ENCODE measurements at regions of chr16 and their contacts with region 1.

Region 1: DNA sequence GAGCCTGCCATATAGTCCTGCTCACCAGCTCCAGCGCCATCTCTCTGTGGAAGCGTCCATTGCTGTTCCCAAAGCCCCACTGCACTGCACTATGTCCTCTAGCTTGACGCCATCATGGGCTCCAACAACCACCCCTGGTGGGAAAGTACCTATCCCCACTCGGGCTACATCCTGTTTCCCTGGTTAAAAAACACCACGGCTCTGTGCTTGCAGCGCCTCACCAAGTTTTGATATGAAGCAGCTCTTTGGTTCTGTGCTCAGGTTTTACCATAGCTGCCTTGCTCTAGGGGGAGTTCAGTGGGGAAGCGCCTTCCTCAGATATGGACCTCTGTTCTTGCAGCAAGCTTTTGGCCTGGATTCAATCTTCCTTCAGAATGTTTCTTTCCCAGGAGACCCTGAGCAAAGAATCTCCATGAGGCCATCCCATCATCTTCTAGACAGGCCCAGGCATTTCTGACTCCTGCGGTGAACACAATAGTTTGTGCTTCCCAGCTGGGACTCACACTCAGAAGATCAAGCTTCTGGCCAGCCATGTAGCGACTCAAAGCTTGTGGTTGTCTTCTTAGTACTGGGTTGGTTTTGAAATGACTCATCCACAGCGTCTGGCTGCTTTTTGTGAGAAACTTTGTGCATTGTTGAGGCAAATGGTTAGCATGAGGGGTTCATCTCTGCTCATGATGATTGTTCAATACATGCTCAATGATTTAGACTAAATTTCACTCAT is 39.5 kb downstream of the DYNLRB2 start:
- DNase-seq: peak; percentile 76
- H3K4me3 Mint-ChIP-seq: peak overlapping the region; percentile 82
- H3K27ac Mint-ChIP-seq: peak overlapping the region; percentile 99
- H3K4me1 Mint-ChIP-seq: peaks cover 51% of the 10 kb centered on the region
- H3K27me3 Mint-ChIP-seq: no peaks in the 10 kb centered on the region

Region 2: GRCh38 chr16:78770353-78771091 is 1809.7 kb before region 1 on chr16:
- intact Hi-C with region 1: loop called (anchors 10 kb)
- DNase-seq: peak; percentile 62
- H3K4me3 Mint-ChIP-seq: no peak overlapping the region
- H3K27ac Mint-ChIP-seq: peak overlapping the region; percentile 2
- H3K4me1 Mint-ChIP-seq: peaks cover 35% of the 10 kb centered on the region
- H3K27me3 Mint-ChIP-seq: peaks cover 7% of the 10 kb centered on the region

Region 3: DNA sequence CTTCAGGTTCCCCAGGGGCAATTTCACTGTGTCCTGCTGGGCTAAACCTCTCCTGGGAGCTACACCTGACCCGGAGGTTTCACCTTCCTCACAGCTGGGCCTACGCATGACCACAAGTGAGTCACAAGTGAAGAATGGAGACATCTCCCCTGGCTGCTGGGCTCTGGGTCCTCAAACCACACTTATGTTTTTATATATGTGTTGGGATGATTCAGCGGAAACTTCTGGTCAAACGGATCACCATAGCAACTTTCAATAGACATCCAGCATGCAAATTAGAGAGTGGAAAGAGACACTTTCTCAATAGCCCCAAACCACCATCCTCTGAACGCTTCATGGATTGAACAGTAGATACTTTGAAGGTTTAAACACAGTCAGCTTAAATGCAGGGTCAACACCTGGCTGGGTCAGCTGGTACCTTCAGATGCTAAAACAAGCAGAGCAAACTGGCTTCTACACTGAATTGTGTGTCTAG is 951.7 kb before region 1 on chr16:
- intact Hi-C with region 1: loop called (anchors 5 kb)
- DNase-seq: peak; percentile 74
- H3K4me3 Mint-ChIP-seq: peak overlapping the region; percentile 9
- H3K27ac Mint-ChIP-seq: peak overlapping the region; percentile 86
- H3K4me1 Mint-ChIP-seq: peaks cover 56% of the 10 kb centered on the region
- H3K27me3 Mint-ChIP-seq: peaks cover 12% of the 10 kb centered on the region

Region 4: DNA sequence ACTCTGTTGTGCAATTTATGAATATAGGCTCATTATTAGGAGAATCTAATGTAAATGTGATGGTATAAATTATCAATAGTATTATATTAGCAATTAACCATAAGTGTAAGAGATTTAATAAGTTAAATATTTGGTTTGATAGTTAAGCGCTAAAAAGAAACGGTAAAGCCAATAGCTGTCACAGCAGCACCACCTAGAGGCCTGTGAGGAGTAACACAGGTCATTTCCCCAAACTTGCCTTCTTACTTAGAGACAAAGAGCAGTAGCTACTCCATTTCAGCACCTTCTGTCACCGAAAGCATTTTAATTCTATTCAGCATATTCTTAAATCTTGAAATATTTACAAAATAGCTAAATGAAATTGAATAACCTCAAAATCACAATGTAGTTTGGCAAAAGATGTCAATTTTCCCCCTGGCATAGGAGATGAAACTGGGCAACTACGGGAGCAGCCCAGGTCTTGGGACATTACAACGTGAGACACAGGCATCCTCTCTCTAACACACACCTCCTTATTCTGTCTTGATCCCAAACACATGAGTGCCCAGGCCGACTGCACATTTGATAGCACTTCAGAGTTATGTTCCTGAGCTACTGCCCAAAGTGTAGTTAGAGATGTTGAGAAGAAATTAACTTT is 53.7 kb before region 1 on chr16:
- intact Hi-C with region 1: no loop called
- DNase-seq: peak; percentile 35
- H3K4me3 Mint-ChIP-seq: no peak overlapping the region
- H3K27ac Mint-ChIP-seq: no peak overlapping the region
- H3K4me1 Mint-ChIP-seq: peaks cover 8% of the 10 kb centered on the region
- H3K27me3 Mint-ChIP-seq: peaks cover 26% of the 10 kb centered on the region

Region 5: DNA sequence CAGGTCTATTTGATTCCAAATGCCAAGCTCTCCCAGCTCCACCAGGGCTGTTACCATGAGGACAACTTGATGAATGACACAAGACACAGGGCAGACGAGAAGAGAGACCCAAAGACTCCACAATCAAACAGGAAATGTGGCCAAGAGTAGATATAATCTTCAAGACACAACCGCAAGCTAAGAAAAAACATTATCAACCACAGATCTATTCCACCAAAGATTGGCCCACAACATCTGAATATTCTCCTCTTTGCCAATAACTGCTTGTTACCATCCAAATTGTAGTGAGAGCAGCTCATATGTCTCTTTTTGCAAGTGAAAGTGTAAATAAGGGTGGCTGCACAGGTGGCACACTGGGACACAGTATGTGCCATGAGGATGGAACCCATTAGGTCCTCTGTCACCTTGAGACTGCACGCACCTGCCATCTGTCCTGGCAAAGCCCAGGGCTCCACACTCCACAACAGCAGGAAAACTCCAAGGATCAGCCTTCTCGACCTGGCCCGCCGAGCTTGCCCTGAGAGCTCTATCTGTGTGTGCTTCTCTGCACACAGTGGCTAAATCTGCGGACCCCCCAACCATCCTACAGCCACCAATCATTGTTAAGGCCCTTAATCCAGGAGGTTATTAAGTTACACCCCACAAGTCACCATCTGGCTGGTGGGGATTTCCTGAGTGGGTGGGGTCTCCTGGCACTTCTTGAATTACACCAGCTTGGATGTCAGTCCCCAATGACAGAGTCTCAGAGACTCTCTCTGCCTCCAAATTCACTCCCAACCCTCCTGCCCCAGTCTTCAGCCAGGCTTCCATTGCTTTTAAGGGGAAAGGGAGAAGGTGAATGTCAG is 11.0 kb after region 1 on chr16:
- intact Hi-C with region 1: loop called (anchors 1 kb)
- DNase-seq: peak; percentile 58
- H3K4me3 Mint-ChIP-seq: peak overlapping the region; percentile 53
- H3K27ac Mint-ChIP-seq: peak overlapping the region; percentile 48
- H3K4me1 Mint-ChIP-seq: peaks cover 39% of the 10 kb centered on the region
- H3K27me3 Mint-ChIP-seq: peaks cover 50% of the 10 kb centered on the region

Region 6: GRCh38 chr16:80759419-80760162 is 179.3 kb after region 1 on chr16:
- intact Hi-C with region 1: loop called (anchors 2 kb)
- DNase-seq: no peak
- H3K4me3 Mint-ChIP-seq: no peak overlapping the region
- H3K27ac Mint-ChIP-seq: peak overlapping the region; percentile 80
- H3K4me1 Mint-ChIP-seq: peaks cover 22% of the 10 kb centered on the region
- H3K27me3 Mint-ChIP-seq: no peaks in the 10 kb centered on the region

Region 7: GRCh38 chr16:81006814-81007696 is 426.8 kb after region 1 on chr16 and contains the starts of genes CENPN and CMC2:
- intact Hi-C with region 1: loop called (anchors 5 kb)
- DNase-seq: peak; percentile 98
- H3K4me3 Mint-ChIP-seq: peak within 1 kb of the TSS; percentile 96
- H3K27ac Mint-ChIP-seq: peak within 1 kb of the TSS; percentile 100
- H3K4me1 Mint-ChIP-seq: peaks cover 46% of the 10 kb centered on the region
- H3K27me3 Mint-ChIP-seq: no peaks in the 10 kb centered on the region
- total RNA-seq, gene CENPN: 57.4 and 57.9 TPM in 2 replicates
- total RNA-seq, gene CMC2: 130 and 136 TPM in 2 replicates

Measured in activated T-helper 2 cell treated with anti-CD3 and anti-CD28 coated beads, Interferon-gamma antibody, Interleukin-2, Interleukin-4, amounts not matched to agents 10 μg/mL and 5 μg/mL and 100 μg/mL, durations not matched to agents 14 hours and 24 hours and 36 hours (primary cell).